B cell (primary cell): ENCODE measurements at regions of chr6 and their contacts with region 1.

Region 1: GRCh38 chr6:70566751-70567382 is at the start of gene SDHAF4:
- DNase-seq: peak; percentile 94
- ATAC-seq: peak; percentile 99
- H3K4me3 ChIP-seq: peak within 1 kb of the TSS; percentile 72 to 91 (median 83)
- H3K4me3 Mint-ChIP-seq: peak within 1 kb of the TSS; percentile 93
- H3K27ac ChIP-seq: peak within 1 kb of the TSS; percentile 73 to 84
- H3K27ac Mint-ChIP-seq: peak within 1 kb of the TSS; percentile 83
- H3K4me1 ChIP-seq: peaks cover 5 to 12% of the 10 kb centered on the region in 2 donors
- H3K4me1 Mint-ChIP-seq: peaks cover 19% of the 10 kb centered on the region
- H3K27me3 ChIP-seq: no peaks in the 10 kb centered on the region
- H3K27me3 Mint-ChIP-seq: no peaks in the 10 kb centered on the region
- CTCF ChIP-seq: no peak
- total RNA-seq, gene SDHAF4: 9.1 and 15.4 TPM in 2 replicates

Region 2: GRCh38 chr6:70667711-70668498 is 101.0 kb after region 1 on chr6 and contains the start of gene SMAP1:
- CTCF ChIA-PET with region 1: interaction called, 4 read pairs
- POLR2A ChIA-PET with region 1: no interaction called
- intact Hi-C with region 1: loop called (anchors 1 kb)
- DNase-seq: peak; percentile 95
- ATAC-seq: peak; percentile 97
- H3K4me3 ChIP-seq: peak within 1 kb of the TSS; percentile 69 to 92 (median 82)
- H3K4me3 Mint-ChIP-seq: peak within 1 kb of the TSS; percentile 90
- H3K27ac ChIP-seq: peak within 1 kb of the TSS; percentile 60 to 83
- H3K27ac Mint-ChIP-seq: peak within 1 kb of the TSS; percentile 93
- H3K4me1 ChIP-seq: peaks cover 17 to 23% of the 10 kb centered on the region in 2 donors
- H3K4me1 Mint-ChIP-seq: peaks cover 37% of the 10 kb centered on the region
- H3K27me3 ChIP-seq: no peaks in the 10 kb centered on the region
- H3K27me3 Mint-ChIP-seq: peaks cover 6% of the 10 kb centered on the region
- CTCF ChIP-seq: no peak
- total RNA-seq, gene SMAP1: 19.7 and 21.7 TPM in 2 replicates